Left ventricle myocardium superior (tissue), 1 donor: ENCODE measurements at regions of chr16 and their contacts with region 1.

Region 1: DNA sequence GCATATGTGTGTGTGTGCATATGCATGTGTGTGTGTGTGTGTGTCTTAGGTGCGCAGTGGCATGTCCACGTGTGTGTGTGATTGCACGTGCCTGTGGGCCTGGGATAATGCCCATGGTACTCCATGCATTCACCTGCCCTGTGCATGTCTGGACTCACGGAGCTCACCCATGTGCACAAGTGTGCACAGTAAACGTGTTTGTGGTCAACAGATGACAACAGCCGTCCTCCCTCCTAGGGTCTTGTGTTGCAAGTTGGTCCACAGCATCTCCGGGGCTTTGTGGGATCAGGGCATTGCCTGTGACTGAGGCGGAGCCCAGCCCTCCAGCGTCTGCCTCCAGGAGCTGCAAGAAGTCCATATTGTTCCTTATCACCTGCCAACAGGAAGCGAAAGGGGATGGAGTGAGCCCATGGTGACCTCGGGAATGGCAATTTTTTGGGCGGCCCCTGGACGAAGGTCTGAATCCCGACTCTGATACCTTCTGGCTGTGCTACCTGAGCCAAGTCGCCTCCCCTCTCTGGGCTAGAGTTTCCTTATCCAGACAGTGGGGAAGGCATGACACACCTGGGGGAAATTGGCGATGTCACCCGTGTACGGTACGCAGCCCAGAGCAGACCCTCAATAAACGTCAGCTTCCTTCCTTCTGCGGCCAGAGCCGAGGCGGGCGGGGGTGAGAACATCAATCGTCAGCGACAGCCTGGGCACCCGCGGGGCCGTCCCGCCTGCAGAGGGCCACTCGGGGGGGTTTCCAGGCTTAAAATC is 47.6 kb downstream of the IL21R start:
- DNase-seq: no peak
- ATAC-seq: no peak

Region 2: DNA sequence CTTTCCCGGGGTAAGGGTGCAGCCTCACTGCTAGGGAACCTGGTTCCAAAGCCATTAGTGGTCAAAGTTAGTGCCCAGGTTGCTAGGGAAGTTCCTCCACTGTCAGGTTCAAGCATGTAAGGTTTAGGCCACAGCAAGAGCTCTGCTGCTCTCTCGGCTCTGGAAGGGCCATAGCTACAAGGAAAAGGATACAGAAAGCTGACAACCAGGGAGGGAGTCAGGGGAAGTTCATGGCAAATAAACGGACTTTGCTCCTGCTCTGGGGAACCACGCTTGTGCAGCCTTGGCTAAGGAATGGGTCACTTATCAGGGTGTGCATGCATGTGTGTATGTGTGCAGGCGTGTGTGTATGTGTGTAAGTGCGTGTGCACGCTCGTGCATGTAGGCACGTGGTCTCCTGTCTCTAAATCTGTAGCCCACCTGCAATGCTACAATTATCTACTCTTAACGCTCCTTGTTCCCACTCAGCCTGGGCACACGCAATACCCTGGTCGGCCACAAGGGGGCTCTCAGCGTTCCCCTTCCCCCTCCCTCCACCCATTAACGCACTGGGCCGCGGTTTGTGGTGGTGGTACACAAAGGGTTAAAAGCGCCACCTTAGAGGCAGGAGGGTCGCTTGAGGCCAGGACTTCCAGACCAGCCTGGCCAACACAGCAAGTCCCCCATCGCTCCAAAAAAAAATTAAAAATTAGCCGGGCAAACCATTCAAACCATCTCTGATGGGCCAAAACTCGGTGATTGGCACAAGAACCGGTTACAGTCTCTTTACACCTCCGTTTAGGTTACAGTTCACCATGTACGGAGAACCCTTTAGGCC is 294.7 kb before region 1 on chr16:
- intact Hi-C with region 1: loop called (anchors 10 kb)
- DNase-seq: peak; percentile 76
- ATAC-seq: peak; percentile 70

Region 3: GRCh38 chr16:27355610-27356009 is 94.0 kb before region 1 on chr16:
- intact Hi-C with region 1: no loop called
- DNase-seq: peak; percentile 61
- ATAC-seq: peak; percentile 41

Region 4: DNA sequence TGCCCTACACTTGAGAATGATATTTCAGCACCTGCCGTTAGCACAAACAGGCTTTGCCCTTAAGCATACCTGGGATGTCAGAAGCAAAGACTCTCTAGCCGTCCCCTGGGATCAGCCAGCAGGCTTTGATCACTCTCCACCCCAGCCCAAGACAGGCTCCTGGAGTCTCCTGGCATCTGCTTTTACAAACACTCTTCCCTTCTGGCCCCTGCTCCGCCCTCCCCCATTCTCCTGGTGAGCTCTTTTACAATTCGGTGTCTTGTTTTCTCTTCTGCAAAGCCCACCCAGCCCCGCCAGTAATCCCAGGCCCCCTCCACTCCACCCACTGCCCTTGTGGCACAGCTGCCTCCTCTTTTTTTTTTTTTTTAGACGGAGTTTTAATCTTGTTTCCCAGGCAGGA is 150.8 kb after region 1 on chr16:
- intact Hi-C with region 1: no loop called
- DNase-seq: no peak
- ATAC-seq: no peak

Region 5: DNA sequence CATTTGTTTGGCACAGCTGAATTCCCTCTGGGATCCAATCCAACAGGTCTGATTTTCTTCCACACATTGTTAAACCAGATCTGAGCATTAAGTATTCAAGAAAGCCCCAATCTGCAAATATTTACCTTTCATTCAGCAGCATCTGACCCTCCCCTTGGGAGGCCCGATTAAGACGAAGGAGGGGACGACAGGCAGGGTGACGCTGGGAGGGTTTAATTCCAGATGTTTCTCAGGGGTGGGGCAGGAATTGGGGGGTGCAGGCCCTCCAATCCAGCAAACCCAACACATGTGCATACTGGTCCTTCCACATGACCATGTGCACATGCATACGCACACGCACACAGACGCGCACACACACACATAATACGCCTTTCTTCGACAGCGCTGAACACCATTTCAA is 373.4 kb after region 1 on chr16:
- intact Hi-C with region 1: no loop called
- DNase-seq: no peak
- ATAC-seq: no peak